Left lung (tissue), 14 donors: ENCODE measurements at regions of chr1 and their contacts with region 1.

Region 1: GRCh38 chr1:117534995-117535467 is 70.8 kb upstream of the TENT5C start:
- DNase-seq: peak in 2 of 4 donors; percentile 50 to 60
- ATAC-seq: peak; percentile 93
- H3K4me3 ChIP-seq: no peak overlapping the region
- H3K27ac ChIP-seq: no peak overlapping the region
- H3K4me1 ChIP-seq: peaks cover 0 to 4% of the 10 kb centered on the region in 2 donors
- H3K27me3 ChIP-seq: no peaks in the 10 kb centered on the region
- CTCF ChIP-seq: peak; percentile 40 to 57

Region 2: GRCh38 chr1:117664314-117664713 is 129.3 kb after region 1 on chr1:
- intact Hi-C with region 1: no loop called
- DNase-seq: no peak
- ATAC-seq: peak; percentile 23
- H3K4me3 ChIP-seq: no peak overlapping the region
- H3K27ac ChIP-seq: no peak overlapping the region
- H3K4me1 ChIP-seq: no peaks in the 10 kb centered on the region
- H3K27me3 ChIP-seq: no peaks in the 10 kb centered on the region
- CTCF ChIP-seq: no peak

Region 3: DNA sequence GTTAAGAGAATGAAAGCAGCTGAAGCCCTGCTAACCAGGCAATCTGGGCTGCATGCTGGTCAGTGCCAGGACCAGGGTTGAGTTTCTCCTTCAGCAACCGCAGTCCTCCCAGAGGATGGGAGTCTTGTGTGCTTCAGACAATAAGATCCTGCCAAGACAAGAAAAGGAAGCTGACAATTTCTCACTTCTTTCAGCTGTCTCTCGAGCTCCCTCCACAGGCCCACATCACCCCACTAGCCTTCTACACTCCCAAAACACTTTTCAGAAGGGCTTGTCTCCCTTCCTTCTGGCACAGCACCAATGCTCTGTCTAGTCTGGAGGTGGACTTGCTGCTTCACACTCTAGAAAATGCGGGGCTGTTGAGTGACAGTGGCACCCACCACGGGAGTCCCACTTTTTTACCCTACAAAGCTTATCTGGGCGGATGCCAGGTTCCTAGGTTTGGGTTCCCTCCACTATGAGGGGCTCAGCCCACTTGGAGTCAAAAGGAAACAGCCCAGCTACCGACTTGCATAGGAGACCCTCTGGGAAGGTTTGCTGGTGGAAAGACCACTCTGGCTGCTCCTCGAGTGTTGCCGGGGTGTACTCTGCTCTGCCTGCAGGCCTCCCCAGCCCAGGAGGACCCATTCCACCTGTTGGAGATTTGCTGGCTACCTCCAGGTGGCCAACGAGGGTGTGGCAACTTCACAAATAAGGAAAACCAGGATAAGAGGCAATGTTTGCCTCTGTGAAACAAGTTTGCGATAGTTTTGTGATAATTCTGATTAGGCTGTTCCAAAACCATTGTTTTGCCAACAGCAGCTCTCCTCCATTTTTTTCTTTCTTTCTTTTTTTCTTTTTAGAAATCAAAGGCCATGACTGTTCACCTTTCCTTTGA is 139.7 kb after region 1 on chr1:
- intact Hi-C with region 1: loop called in 1 of 2 experiments (anchors 5 kb)
- DNase-seq: no peak
- ATAC-seq: peak; percentile 33
- H3K4me3 ChIP-seq: no peak overlapping the region
- H3K27ac ChIP-seq: no peak overlapping the region
- H3K4me1 ChIP-seq: no peaks in the 10 kb centered on the region
- H3K27me3 ChIP-seq: no peaks in the 10 kb centered on the region
- CTCF ChIP-seq: no peak

Region 4: GRCh38 chr1:117895482-117896114 is 360.6 kb after region 1 on chr1:
- intact Hi-C with region 1: loop called in 1 of 2 experiments (anchors 10 kb)
- DNase-seq: peak in 3 of 4 donors; percentile 36 to 79 (median 56)
- ATAC-seq: peak; percentile 88
- H3K4me3 ChIP-seq: no peak overlapping the region
- H3K27ac ChIP-seq: no peak overlapping the region
- H3K4me1 ChIP-seq: no peaks in the 10 kb centered on the region
- H3K27me3 ChIP-seq: no peaks in the 10 kb centered on the region
- CTCF ChIP-seq: peak; percentile 60 to 73